PC-9 (cell line): ENCODE measurements at regions of chrX and their contacts with region 1.

Region 1: DNA sequence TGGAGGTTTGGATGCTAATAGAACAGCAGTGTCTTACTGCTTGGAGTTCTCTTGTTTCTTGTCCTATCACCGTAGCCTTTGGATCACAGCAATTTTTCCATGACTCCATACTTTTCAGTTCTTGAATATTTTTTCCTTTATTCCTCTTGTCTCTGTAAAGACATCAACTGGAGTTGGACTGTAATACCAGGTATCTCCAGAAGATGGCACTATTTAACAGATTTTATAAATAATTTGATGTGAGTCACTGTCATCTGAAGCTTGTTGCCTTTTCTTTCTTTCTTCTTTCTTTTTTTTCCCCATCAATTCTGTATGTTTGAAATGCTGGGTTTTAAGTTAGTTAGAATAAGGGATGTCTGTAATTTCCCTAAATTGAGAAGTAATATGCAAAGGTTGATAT is 24.1 kb downstream of the HPRT1 start:
- DNase-seq: peak in 1 of 2 experiments; percentile 62
- H3K4me3 ChIP-seq: no peak overlapping the region
- H3K27ac ChIP-seq: no peak overlapping the region
- H3K4me1 ChIP-seq: no peaks in the 10 kb centered on the region
- H3K27me3 ChIP-seq: no peaks in the 10 kb centered on the region
- CTCF ChIP-seq: peak; percentile 94

Region 2: DNA sequence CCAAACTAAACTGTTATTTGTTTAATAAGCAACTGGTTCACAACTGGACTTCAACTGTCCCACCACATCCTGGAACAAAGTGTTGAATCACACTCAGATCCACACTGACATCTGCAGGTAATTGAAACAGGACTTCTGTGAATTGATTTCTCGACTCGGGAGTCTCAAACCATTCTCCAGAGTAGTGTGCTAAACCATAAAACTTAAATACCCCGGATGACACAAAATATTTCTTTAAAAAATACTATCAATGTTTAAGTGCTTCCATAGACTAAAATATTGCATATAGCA is 269.6 kb after region 1 on chrX:
- CTCF ChIA-PET with region 1: no interaction called
- POLR2A ChIA-PET with region 1: no interaction called
- intact Hi-C with region 1: loop called (anchors 5 kb)
- DNase-seq: no peak
- H3K4me3 ChIP-seq: no peak overlapping the region
- H3K27ac ChIP-seq: no peak overlapping the region
- H3K4me1 ChIP-seq: peaks cover 8% of the 10 kb centered on the region; the same call in 1 of the 2 replicates
- H3K27me3 ChIP-seq: no peaks in the 10 kb centered on the region
- CTCF ChIP-seq: no peak; the same call in 1 of the 2 replicates

Region 3: GRCh38 chrX:134908356-134908755 is 424.3 kb after region 1 on chrX:
- CTCF ChIA-PET with region 1: no interaction called
- POLR2A ChIA-PET with region 1: no interaction called
- intact Hi-C with region 1: loop called (anchors 1 kb)
- DNase-seq: no peak
- H3K4me3 ChIP-seq: no peak overlapping the region
- H3K27ac ChIP-seq: no peak overlapping the region
- H3K4me1 ChIP-seq: peaks cover 2% of the 10 kb centered on the region; the same call in 1 of the 2 replicates
- H3K27me3 ChIP-seq: no peaks in the 10 kb centered on the region
- CTCF ChIP-seq: peak; percentile 53

Region 4: DNA sequence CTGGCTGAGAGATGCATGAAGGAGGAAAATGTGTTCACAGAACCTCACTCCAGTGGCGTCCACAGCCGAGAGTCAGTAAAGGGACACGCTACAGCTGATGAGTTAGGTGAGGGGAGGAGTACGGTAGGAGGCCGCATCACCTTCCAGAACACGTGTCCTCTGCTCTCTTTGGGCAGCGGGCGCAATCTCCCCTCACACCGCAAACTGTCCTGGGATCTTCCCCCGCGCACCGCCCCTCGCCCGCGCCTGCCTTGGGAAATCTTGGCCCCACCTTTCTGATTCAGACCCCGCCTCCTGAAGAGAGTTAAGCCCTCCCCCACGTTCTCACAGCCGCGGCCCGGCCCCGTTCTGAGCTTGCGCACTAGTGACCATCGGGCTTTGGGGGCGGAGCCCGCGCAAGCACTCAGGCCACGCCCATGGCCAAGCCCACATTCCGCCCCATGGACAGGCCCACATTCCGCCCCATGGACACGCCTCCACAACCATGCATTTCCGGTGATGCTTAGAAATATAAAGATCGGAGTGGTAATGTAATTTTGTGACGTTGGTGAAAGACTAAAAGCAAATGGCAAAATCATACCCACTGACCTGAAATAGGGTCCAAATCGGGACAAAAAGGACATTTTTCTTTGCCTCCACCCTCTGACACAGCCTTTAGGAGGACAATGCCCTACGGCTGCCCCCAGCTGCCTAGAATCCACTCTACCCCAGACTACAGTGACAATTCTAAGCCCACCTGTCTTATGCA is 520.0 kb after region 1 on chrX:
- CTCF ChIA-PET with region 1: no interaction called
- POLR2A ChIA-PET with region 1: no interaction called
- intact Hi-C with region 1: loop called (anchors 1 kb)
- DNase-seq: peak; percentile 84 to 98
- H3K4me3 ChIP-seq: peak overlapping the region; percentile 65
- H3K27ac ChIP-seq: peak overlapping the region; percentile 39
- H3K4me1 ChIP-seq: peaks cover 35% of the 10 kb centered on the region
- H3K27me3 ChIP-seq: no peaks in the 10 kb centered on the region
- CTCF ChIP-seq: no peak